ENCODE measurements at regions of chrX and their contacts with region 1.

Region 1: DNA sequence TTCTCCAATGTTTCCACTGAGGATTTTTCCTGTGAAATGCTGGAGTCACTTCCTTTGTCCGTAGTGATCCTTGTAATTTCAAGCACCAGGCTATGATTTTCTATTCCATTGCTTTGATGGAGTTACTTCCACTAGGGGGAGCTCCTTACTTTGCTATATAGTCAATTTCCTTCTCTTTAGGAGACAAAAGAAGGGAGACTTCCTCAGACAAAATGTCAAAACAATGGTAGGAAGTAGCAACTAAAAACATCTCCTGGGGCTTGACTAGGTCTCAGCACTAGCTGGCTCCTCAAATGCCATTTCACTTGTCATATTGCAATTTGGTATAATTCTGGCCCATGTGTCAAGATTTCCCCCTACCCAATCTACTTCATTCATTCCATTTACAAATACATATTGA is 24.1 kb downstream of the ZCCHC12 start:
- DNase-seq: no peak

Region 2: DNA sequence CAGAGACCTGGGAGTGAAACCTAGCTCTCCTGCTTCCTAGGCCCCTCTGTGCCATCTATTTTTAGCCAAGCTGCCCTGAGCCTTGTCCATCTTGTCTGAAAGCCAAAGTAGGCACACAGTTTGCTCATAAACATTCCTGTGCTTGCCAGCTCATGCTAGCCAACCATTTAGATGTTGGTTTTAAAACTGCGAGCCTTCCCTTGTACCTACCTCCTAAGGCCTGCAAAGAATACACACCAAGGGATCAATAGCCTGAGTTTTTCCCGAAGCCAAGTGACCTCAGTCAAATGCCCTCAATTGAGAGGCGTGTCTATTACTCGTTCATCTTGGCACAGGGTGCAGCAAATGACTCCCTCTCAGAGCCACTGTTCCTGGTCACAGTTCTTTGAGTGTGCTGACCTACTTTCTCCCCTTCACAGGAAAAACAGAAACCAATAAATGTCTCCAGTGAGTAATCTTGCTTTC is 24.5 kb after region 1 on chrX:
- intact Hi-C with region 1: no loop called
- DNase-seq: no peak

Region 3: DNA sequence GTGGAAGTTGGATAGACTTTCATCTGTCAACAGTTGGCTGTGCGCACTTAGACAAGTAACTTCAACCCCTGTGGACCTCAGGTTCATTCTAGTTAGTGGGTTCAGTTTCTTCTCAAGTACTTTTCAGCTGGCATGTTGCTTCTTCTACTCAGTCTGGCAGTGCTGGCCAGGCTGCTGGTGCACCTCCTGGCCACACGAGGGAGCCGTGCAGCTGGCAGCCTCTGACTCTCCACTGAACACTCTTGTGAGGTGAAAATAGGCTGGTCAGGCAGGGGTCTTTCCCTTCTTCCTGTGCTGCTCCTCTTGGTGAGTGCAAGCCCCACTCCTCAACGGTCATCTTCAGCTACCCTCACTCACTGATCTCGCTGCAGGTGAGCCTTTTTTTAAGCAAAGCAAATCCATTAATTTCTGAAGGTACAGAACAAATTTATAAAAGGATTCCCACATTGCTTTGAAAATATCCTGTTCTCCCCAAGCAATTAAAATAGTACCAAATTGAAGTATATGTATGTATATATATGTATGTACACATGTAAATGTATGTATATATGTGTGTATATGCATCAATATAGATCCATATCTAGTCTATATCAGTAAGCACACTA is 157.3 kb after region 1 on chrX:
- intact Hi-C with region 1: loop called (anchors 10 kb)
- DNase-seq: no peak

Region 4: DNA sequence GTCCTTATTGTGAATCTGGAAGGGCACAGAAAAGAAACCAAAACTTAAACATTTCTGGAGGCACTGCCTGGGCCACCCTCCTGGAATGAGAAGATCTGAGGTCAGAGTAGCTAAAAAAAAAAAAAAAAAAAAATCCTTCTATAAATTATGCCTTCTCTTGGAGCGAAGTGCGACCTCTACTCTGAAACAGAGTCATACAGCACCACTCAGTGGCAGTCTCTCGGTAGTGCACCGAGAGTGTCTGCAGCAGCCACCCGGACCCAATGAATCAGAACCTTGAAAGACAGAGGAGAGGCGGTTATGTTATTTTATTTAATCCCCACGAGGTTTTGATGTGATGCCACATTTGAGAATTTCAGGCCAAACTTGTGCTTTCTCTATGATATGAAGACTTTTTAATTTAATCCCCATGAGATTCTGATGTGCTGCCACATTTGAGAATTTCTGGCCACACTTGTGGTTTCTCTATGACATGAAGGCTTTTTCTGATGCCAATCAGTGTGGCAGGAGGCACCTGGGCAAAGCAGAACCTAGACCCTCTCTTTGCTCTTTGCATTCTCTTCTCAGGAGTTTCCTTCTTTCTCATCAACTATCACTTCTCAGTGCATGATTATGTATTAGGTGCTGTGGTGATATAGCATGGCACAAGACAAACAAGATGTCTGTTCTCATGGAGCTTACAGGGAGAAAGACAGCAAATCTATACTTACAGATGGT is 219.5 kb after region 1 on chrX:
- intact Hi-C with region 1: loop called in 1 of 2 experiments (anchors 5 kb)
- DNase-seq: no peak

Region 5: DNA sequence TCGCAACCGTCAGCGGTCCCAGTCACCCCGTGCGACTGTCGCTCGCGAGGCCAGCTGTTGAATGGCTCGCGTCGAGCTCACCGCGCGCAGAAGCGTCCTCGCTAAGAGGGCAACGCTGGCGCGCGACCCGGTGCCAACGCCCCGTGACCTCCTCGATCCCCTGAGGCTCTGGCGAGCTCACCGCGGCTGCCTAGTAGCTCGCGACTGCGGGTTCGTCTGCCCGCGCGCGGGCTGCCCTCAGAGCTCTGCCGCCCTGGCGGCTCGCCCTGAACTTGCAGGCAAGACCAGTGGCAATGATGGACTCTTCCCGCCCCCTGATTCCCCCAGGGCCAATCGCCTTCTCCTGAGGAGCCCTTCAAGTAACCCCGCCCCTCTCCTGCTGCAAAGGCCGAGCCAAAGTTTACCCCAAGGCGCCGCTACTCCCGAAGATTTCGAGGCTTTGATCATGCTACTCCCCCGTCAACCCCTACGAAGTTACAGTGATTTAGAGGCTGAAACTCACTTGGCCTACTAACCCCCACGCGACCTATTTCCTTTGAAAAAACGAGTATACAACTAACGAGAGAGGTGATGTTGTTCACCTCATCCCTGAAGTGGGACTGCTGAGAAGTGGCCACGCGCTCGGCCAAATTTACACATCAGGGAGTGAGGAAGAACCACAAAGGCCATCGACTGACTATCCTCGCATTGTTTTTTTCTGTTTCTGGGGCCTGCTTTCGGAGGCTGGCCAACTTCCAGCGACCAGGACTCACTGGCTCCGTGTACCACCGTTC is 425.9 kb after region 1 on chrX:
- intact Hi-C with region 1: no loop called
- DNase-seq: no peak

Measured in posterior vena cava (tissue), 2 donors.